Tibial artery (tissue), 4 donors: ENCODE measurements at regions of chr17 and their contacts with region 1.

Region 1: DNA sequence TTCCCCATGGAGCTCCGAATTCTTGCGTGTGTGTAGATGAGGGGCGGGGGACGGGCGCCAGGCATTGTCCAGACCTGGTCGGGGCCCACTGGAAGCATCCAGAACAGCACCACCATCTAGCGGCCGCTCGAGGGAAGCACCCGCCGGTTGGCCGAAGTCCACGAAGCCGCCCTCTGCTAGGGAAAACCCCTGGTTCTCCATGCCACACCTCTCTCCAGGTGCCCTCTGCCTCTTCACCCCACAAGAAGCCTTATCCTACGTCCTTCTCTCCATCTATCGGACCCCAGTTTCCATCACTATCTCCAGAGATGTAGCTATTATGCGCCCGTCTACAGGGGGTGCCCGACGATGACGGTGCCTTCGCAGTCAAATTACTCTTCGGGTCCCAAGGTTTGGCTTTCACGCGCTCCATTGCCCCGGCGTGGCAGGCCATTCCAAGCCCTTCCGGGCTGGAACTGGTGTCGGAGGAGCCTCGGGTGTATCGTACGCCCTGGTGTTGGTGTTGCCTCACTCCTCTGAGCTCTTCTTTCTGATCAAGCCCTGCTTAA is 617 bp upstream of the SENP3 start:
- DNase-seq: peak; percentile 87 to 94
- H3K4me3 ChIP-seq: peak overlapping the region; percentile 86 to 99
- H3K27ac ChIP-seq: peak overlapping the region; percentile 95 to 96
- H3K4me1 ChIP-seq: peaks cover 0 to 76% (median 62%) of the 10 kb centered on the region in 4 donors
- H3K27me3 ChIP-seq: no peaks in the 10 kb centered on the region
- CTCF ChIP-seq: peak; percentile 87 to 91

Region 2: GRCh38 chr17:7252176-7253043 is 308.7 kb before region 1 on chr17 and contains the start of gene ELP5:
- intact Hi-C with region 1: loop called (anchors 10 kb)
- DNase-seq: peak; percentile 94 to 97
- H3K4me3 ChIP-seq: peak within 1 kb of the TSS; percentile 94 to 98
- H3K27ac ChIP-seq: peak within 1 kb of the TSS; percentile 96 to 100
- H3K4me1 ChIP-seq: peaks cover 0 to 40% (median 32%) of the 10 kb centered on the region in 4 donors
- H3K27me3 ChIP-seq: no peaks in the 10 kb centered on the region
- CTCF ChIP-seq: no peak

Region 3: DNA sequence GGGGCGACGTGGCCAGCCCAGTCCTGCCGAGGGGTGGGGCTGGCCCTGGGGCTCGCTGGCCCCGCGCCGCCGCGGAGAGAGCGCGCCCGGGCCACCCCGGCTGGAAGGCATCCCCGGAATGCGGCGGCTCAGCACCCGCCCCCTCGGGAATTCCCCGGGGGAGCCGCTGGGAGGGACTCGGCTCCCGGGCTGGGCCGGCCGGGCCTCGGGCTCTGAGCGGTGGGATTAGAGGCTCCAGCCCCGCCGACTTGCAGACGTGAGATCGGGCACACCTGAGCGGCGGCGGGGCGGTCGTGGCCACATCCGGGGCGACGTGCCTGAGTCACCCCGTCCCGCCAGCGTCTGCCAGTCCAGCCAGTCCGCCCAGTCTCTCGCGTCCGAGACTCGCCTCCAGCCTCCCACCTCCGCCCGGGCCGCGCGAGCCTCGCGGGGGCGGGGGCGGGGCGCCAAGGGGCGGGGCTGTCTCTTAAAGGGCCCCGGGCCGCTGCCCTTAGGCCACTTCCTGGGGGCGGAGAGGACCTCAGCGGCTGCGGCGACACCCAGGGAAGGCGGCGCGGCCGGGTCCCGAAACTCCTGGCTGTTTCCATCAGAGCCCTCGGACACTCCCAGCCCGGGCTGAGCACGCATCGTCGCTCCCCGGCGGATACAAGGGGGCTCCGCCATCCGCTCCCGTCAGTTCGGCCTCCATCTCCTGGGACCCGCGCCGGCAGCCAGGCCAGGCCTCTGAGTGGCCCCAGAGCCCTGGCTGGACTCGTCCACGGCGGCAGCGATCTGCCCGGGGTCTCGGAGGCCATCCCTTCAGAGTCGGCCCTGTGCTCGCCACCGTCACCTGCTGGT is 209.2 kb before region 1 on chr17 and contains the start of gene KCTD11:
- intact Hi-C with region 1: loop called (anchors 5 kb)
- DNase-seq: peak; percentile 92 to 97
- H3K4me3 ChIP-seq: peak within 1 kb of the TSS; percentile 86 to 91
- H3K27ac ChIP-seq: peak within 1 kb of the TSS; percentile 99
- H3K4me1 ChIP-seq: peaks cover 0 to 73% (median 41%) of the 10 kb centered on the region in 4 donors
- H3K27me3 ChIP-seq: no peaks in the 10 kb centered on the region
- CTCF ChIP-seq: peak in 1 of 2 experiments; percentile 62

Region 4: DNA sequence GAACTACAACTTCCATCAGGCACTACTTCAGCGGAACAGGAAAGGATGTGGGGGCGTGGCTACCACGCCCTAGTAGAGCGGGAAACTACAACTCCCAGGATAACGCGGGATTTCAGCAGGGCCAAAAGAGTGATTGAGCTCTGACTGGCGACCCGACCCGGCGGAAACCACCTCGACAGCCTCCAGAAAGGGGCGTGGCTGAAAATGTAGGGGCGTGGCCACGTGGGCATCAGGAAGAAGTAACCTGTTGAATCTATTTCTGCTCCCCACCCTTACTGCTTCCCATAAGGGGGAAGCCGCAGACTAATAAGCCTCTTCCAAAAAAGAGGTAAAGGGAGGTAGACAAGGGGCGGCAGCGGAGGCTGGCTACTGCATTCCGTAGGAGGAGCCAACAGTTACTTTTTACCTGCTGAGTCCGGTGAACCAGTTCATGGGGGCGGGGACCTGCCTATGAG is 125.9 kb before region 1 on chr17 and contains the start of gene TMEM102:
- intact Hi-C with region 1: loop called (anchors 5 kb)
- DNase-seq: peak; percentile 97 to 98
- H3K4me3 ChIP-seq: peak within 1 kb of the TSS; percentile 55 to 71
- H3K27ac ChIP-seq: peak within 1 kb of the TSS; percentile 59 to 65
- H3K4me1 ChIP-seq: peaks cover 0 to 50% (median 40%) of the 10 kb centered on the region in 4 donors
- H3K27me3 ChIP-seq: peaks cover 3 to 30% of the 10 kb centered on the region in 2 donors
- CTCF ChIP-seq: no peak

Region 5: DNA sequence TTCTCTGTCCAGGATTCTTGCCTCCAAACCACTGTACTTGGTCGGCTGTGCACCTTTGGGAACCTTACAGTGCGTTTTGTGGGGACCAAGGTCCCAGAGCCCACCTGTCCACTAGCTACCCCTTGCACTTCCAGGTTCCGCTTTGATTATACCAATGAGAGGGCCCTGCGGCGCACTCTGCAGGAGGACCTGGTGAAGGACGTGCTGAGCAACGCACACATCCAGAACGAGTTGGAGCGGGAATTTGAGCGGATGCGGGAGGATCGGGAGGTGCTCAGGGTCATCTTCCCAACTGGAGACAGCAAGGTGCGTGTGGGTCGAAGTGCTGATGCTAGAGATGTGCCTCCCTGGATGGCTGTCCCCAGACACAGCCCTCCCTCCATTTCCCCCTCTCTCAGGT is 58.1 kb before region 1 on chr17:
- intact Hi-C with region 1: no loop called
- DNase-seq: no peak
- H3K4me3 ChIP-seq: no peak overlapping the region
- H3K27ac ChIP-seq: no peak overlapping the region
- H3K4me1 ChIP-seq: no peaks in the 10 kb centered on the region
- H3K27me3 ChIP-seq: no peaks in the 10 kb centered on the region
- CTCF ChIP-seq: no peak

Region 6: GRCh38 chr17:7513850-7514419 is 47.2 kb before region 1 on chr17:
- intact Hi-C with region 1: loop called (anchors 1 kb)
- DNase-seq: no peak
- H3K4me3 ChIP-seq: no peak overlapping the region
- H3K27ac ChIP-seq: no peak overlapping the region
- H3K4me1 ChIP-seq: no peaks in the 10 kb centered on the region
- H3K27me3 ChIP-seq: no peaks in the 10 kb centered on the region
- CTCF ChIP-seq: no peak

Region 7: DNA sequence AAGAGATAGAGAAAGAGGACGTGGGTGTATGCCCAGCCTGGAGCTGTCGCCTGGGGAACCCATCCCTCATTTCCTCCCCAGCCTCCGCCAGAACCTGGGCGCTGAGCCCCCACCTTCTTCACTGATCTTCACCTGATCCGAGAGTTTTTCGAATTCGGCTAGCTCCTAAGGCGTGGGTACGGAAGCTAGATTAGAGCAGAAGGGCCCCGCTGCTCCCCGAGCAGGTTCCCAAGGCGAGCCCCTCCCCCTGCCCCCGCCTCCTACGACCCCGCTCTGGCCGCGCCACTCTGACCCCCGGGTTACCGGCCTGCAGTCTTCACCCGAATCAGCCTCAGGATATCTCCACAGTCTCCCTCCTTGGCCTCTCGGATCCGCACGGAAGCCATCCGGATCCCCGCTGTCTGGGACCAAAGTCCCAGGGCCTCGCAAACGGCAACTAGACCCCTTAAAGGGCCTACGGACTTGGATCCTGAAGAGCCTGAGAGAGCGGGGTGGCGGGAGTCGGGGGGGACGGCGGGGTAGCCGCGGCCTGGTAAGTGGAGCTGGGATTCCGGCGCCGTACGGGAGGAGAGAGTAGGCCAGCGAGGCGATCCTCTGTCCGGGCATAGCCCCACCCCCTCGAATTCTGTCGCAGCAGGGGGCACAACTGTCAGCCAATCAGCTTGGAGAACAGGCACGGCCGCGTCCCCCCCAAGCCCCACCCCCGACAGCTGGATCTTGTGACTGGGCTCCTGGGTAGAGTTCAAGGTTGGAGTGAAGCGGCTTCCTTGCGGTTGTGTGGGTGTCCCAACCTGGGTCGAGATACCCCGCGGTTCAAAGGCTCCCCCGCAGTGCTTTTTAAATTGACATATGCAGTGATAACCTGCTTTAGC is 66.4 kb after region 1 on chr17 and contains the start of gene SAT2:
- intact Hi-C with region 1: loop called (anchors 10 kb)
- DNase-seq: peak; percentile 96 to 98
- H3K4me3 ChIP-seq: peak within 1 kb of the TSS; percentile 67 to 69
- H3K27ac ChIP-seq: peak within 1 kb of the TSS; percentile 85 to 92
- H3K4me1 ChIP-seq: peaks cover 0 to 18% (median 9%) of the 10 kb centered on the region in 4 donors
- H3K27me3 ChIP-seq: no peaks in the 10 kb centered on the region
- CTCF ChIP-seq: no peak